ENCODE measurements at regions of chr5 and their contacts with region 1.

Region 1: DNA sequence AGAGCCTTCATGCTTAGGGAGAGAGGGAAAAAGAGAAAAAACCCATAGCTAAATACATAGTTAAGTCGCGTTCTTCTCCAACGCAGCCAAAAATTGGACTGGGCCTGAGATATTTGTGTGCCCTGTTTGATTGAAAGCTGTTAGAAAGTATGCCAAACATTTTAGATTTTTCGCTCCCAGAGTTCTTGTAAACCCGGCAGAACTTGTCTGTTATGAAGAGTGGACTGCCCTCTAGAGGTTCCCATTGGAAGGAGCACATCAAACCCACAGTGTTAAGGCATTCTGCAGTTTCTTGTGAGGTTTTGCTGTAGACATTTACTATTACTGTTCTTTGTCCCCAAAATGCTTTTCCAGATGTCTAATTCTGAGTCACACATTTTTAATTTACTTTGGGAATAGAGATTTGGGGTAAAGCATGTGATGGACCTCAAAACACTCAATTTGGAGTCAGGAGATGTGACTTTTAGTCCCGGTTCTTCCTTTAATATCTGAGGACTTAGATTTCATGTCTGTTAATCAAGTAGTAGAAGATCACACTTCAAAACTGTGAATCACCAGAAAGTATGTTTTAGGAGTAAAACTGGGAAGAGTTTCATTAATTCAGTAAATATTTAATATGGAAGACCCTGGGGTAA is 96.6 kb downstream of the PCSK1 start:
- DNase-seq: peak; percentile 85
- ATAC-seq: peak; percentile 78
- H3K4me3 ChIP-seq: peak overlapping the region; percentile 40; the same call in 1 of the 2 replicates
- H3K27ac ChIP-seq: peak overlapping the region; percentile 82
- H3K4me1 ChIP-seq: peaks cover 43% of the 10 kb centered on the region
- H3K27me3 ChIP-seq: no peaks in the 10 kb centered on the region
- CTCF ChIP-seq: peak; percentile 84

Region 2: GRCh38 chr5:95858661-95859326 is 477.7 kb before region 1 on chr5:
- CTCF ChIA-PET with region 1: no interaction called
- POLR2A ChIA-PET with region 1: no interaction called
- intact Hi-C with region 1: loop called (anchors 1 kb)
- DNase-seq: peak; percentile 93
- ATAC-seq: peak; percentile 68
- H3K4me3 ChIP-seq: peak overlapping the region; percentile 56
- H3K27ac ChIP-seq: peak overlapping the region; percentile 99
- H3K4me1 ChIP-seq: peaks cover 49% of the 10 kb centered on the region
- H3K27me3 ChIP-seq: no peaks in the 10 kb centered on the region
- CTCF ChIP-seq: peak; percentile 91

Region 3: GRCh38 chr5:95961617-95962474 is 374.6 kb before region 1 on chr5 and contains the start of gene ELL2:
- CTCF ChIA-PET with region 1: interaction called, 8 read pairs
- POLR2A ChIA-PET with region 1: no interaction called
- intact Hi-C with region 1: loop called (anchors 1 kb)
- DNase-seq: peak; percentile 93
- ATAC-seq: peak; percentile 78
- H3K4me3 ChIP-seq: peak within 1 kb of the TSS; percentile 99
- H3K27ac ChIP-seq: peak within 1 kb of the TSS; percentile 82
- H3K4me1 ChIP-seq: peaks cover 72% of the 10 kb centered on the region
- H3K27me3 ChIP-seq: no peaks in the 10 kb centered on the region
- CTCF ChIP-seq: no peak
- total RNA-seq, gene ELL2: 72.2 and 82.4 TPM in 2 replicates

Region 4: GRCh38 chr5:96093890-96094381 is 242.5 kb before region 1 on chr5:
- CTCF ChIA-PET with region 1: no interaction called
- POLR2A ChIA-PET with region 1: no interaction called
- intact Hi-C with region 1: loop called (anchors 1 kb)
- DNase-seq: peak; percentile 95
- ATAC-seq: peak; percentile 90
- H3K4me3 ChIP-seq: no peak overlapping the region
- H3K27ac ChIP-seq: peak overlapping the region; percentile 85
- H3K4me1 ChIP-seq: peaks cover 43% of the 10 kb centered on the region
- H3K27me3 ChIP-seq: no peaks in the 10 kb centered on the region
- CTCF ChIP-seq: no peak

Region 5: DNA sequence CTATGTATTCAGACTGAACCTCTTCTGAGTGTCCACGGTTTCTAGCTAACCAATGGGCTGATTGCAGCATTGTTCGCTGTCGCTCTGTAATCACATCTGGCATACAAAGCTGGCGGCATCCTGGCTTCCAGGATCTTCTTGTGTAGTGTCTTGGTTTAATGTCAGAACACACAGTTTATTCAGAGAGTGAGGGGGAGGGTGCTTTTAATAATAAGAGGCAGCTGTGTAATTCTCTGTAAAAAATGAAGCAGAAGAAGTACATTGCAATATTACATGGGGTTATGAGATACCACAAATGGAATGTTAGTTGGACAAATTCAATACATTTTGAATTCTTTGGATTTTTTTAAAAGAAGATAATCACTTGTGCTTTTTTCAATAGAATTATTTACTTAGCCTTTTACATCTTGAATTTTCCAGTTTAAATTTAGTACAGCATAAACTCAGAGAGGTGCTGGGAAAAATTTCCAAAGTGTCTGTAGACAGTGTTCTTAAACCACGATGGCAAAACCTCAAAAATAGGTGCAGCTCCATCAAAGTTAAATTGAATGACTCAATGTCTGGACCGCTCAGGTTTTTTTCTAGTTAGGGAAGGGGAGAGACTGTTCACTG is 109.4 kb before region 1 on chr5:
- CTCF ChIA-PET with region 1: interaction called, 3 read pairs
- POLR2A ChIA-PET with region 1: interaction called, 3 read pairs
- intact Hi-C with region 1: loop called (anchors 10 kb)
- DNase-seq: peak; percentile 80
- ATAC-seq: peak; percentile 86
- H3K4me3 ChIP-seq: no peak overlapping the region
- H3K27ac ChIP-seq: peak overlapping the region; percentile 84
- H3K4me1 ChIP-seq: peaks cover 28% of the 10 kb centered on the region
- H3K27me3 ChIP-seq: no peaks in the 10 kb centered on the region
- CTCF ChIP-seq: no peak